ENCODE measurements at regions of chr7 and their contacts with region 1.

Region 1: DNA sequence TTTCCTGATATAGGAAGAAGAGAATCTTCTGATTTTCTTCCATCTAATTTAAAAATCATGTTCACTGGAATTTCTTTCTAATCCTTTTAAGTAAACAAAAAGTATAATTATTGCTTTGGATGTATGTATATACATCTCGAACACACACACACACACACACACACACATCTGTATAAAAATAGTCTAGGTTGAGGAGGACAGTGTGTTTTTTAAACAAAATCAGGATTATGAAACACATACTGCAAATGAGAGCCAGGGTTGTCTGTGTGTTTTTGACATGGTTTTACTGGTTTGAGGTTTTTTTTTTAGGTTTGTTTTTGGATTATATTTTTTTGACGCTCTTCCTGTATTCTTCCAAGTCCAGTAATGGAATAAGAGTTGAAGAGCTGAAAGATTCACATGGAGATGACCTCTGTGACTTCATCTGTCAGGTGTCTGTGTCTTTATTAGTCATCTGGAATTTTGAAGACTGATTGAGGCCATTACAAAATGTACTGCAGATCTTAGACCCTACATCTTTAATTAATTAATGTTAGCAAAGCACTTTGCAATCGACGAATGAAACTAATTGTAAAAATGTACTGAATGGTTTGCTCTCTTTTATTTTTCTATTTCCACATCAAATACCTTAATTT is 237.1 kb downstream of the SUGCT start:
- DNase-seq: no peak
- H3K4me3 ChIP-seq: no peak overlapping the region
- H3K4me3 Mint-ChIP-seq: no peak overlapping the region
- H3K27ac Mint-ChIP-seq: no peak overlapping the region
- H3K4me1 ChIP-seq: no peaks in the 10 kb centered on the region
- H3K4me1 Mint-ChIP-seq: no peaks in the 10 kb centered on the region
- H3K27me3 ChIP-seq: no peaks in the 10 kb centered on the region
- H3K27me3 Mint-ChIP-seq: no peaks in the 10 kb centered on the region
- CTCF ChIP-seq: no peak

Region 2: DNA sequence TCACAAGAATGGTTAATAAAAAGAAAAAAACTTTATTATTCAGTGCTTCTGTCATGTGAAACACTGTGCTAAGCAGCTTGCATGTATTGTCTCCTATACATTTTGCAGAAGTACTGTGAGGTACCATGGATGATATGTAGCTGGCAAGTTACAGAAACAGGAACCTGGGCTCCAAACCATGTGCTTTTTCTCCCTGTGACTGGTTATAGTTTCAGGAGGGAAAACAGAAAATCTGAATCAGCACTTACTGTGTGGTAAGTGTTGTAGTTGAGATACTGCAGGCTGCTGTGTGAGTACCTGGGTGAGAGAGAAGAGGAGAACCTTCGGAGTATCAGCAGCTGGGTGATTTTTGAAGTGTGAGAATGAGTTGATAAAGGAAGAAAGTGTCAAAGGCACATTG is 47.9 kb after region 1 on chr7:
- CTCF ChIA-PET with region 1: no interaction called
- POLR2A ChIA-PET with region 1: no interaction called
- intact Hi-C with region 1: loop called (anchors 1 kb)
- DNase-seq: no peak
- H3K4me3 ChIP-seq: no peak overlapping the region
- H3K4me3 Mint-ChIP-seq: no peak overlapping the region
- H3K27ac Mint-ChIP-seq: no peak overlapping the region
- H3K4me1 ChIP-seq: no peaks in the 10 kb centered on the region
- H3K4me1 Mint-ChIP-seq: peaks cover 6% of the 10 kb centered on the region
- H3K27me3 ChIP-seq: no peaks in the 10 kb centered on the region
- H3K27me3 Mint-ChIP-seq: no peaks in the 10 kb centered on the region
- CTCF ChIP-seq: no peak

Region 3: GRCh38 chr7:40437498-40437897 is 65.6 kb after region 1 on chr7:
- CTCF ChIA-PET with region 1: no interaction called
- POLR2A ChIA-PET with region 1: no interaction called
- intact Hi-C with region 1: no loop called
- DNase-seq: peak in 1 of 2 experiments; percentile 4
- H3K4me3 ChIP-seq: no peak overlapping the region
- H3K4me3 Mint-ChIP-seq: no peak overlapping the region
- H3K27ac Mint-ChIP-seq: no peak overlapping the region
- H3K4me1 ChIP-seq: peaks cover 15% of the 10 kb centered on the region; the same call in 1 of the 2 replicates
- H3K4me1 Mint-ChIP-seq: peaks cover 8% of the 10 kb centered on the region
- H3K27me3 ChIP-seq: no peaks in the 10 kb centered on the region
- H3K27me3 Mint-ChIP-seq: no peaks in the 10 kb centered on the region
- CTCF ChIP-seq: no peak

Measured in Caco-2 (cell line).